OCI-LY7 (cell line): ENCODE measurements at regions of chr11 and their contacts with region 1.

Region 1: GRCh38 chr11:44556735-44557409 is 8.6 kb upstream of the CD82 start:
- DNase-seq: peak; percentile 80
- H3K4me3 ChIP-seq: no peak overlapping the region
- H3K27ac ChIP-seq: peak overlapping the region; percentile 44
- H3K4me1 ChIP-seq: peaks cover 37% of the 10 kb centered on the region
- CTCF ChIP-seq: peak; percentile 85

Region 2: DNA sequence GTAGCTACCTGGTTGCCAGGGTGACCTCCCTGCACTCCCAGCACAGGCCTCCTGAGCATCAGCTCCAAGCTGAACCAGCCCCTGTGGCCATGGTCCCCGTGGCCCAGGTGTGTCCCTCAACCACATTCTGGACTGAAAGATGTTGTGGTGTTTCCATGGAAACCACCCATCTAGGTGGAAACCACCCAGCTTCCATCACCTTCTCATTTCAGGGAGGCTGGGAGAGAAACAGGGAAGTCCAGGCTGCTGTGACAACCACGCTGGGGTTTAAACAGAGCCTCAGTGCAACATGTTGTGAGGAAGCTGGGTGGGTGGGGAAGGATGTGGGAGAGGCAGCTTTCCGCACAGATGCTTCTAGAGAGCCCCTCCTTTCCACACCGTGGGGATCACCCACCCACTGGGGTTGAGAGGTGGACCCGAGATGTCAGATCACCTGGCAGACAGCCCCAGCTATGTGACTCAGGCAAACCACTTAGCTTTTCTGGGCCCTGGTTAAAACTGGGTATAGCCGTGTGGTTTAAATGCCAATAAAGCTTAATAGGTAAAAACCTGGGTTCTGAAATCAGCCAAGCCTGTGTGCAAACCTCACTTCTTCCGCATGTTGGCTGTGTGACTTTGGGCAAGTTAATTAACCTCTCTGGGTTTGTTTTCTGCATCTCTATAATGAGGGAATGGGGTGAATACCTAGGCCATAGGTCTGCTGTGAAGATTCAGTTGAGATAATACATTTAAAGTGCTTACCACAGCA is 55.0 kb after region 1 on chr11:
- CTCF ChIA-PET with region 1: interaction called, 10 read pairs
- POLR2A ChIA-PET with region 1: interaction called, 22 read pairs
- intact Hi-C with region 1: loop called (anchors 1 kb)
- DNase-seq: peak; percentile 23
- H3K4me3 ChIP-seq: no peak overlapping the region
- H3K27ac ChIP-seq: no peak overlapping the region
- H3K4me1 ChIP-seq: peaks cover 51% of the 10 kb centered on the region
- CTCF ChIP-seq: no peak

Region 3: GRCh38 chr11:44775366-44775984 is 218.6 kb after region 1 on chr11:
- CTCF ChIA-PET with region 1: no interaction called
- POLR2A ChIA-PET with region 1: no interaction called
- intact Hi-C with region 1: loop called (anchors 5 kb)
- DNase-seq: peak; percentile 51
- H3K4me3 ChIP-seq: no peak overlapping the region
- H3K27ac ChIP-seq: no peak overlapping the region
- H3K4me1 ChIP-seq: no peaks in the 10 kb centered on the region
- CTCF ChIP-seq: peak; percentile 87

Region 4: GRCh38 chr11:44911029-44911814 is 354.4 kb after region 1 on chr11:
- CTCF ChIA-PET with region 1: no interaction called
- POLR2A ChIA-PET with region 1: no interaction called
- intact Hi-C with region 1: loop called (anchors 10 kb)
- DNase-seq: peak; percentile 85
- H3K4me3 ChIP-seq: no peak overlapping the region
- H3K27ac ChIP-seq: no peak overlapping the region
- H3K4me1 ChIP-seq: peaks cover 6% of the 10 kb centered on the region
- CTCF ChIP-seq: peak; percentile 87